Activated naive CD4-positive, alpha-beta T cell treated with anti-CD3 and anti-CD28 coated beads for 36 hours (primary cell): ENCODE measurements at regions of chr14 and their contacts with region 1.

Region 1: DNA sequence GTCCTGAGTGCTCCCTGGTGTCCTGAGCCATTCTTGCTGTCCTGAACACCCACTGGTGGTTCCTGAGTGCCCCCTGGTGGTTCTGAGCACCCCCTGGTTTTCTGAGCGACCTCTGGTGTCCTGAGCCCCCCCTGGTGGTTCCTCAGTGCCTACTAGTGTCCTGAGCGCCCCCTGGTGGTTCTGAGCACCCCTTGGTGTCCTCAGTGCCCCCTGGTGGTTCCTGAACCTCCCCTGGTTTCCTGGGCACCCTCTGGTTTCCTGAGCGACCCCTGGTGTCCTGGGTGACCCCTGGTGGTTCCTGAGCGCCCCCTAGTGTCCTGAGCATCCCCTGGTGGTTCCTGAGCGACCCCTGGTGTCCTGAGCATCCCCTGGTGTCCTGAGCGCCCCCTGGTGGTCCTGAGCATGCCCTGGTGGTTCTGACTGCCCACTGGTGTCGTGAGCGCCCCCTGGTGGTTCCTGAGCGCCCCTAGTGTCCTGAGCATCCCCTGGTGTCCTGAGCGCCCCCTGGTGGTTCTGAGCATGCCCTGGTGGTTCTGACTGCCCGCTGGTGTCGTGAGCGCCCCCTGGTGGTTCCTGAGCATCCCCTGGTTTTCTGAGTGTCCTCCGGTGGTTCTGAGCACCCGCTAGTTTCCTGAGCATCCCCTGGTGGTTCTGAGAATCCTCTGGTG is 473.1 kb downstream of the TMEM121 start:
- DNase-seq: peak; percentile 96
- H3K4me3 Mint-ChIP-seq: peak overlapping the region; percentile 60
- H3K27ac Mint-ChIP-seq: peak overlapping the region; percentile 75
- H3K4me1 Mint-ChIP-seq: peaks cover 45% of the 10 kb centered on the region
- H3K27me3 Mint-ChIP-seq: no peaks in the 10 kb centered on the region

Region 2: DNA sequence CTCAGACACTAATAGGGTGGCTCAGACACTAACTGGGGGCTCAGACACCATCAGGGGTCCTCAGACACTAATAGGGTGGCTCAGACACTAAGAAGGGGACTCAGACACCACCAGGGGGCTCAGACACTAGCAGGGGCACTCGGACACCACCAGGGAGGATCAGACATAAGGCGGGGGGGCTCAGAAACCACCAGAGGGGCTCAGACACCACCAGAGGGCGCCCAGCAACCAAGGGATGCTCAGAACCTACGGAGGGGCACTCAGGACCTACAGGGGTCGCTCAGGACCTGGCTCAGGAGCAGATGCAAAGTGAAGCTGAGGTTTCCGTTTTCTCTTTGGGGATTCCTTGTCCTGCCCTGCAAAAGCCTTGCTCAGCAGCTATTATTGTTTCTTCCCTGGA is 24.6 kb before region 1 on chr14:
- CTCF ChIA-PET with region 1: interaction called, 21 read pairs
- intact Hi-C with region 1: loop called (anchors 1 kb)
- DNase-seq: peak; percentile 64
- H3K4me3 Mint-ChIP-seq: no peak overlapping the region
- H3K27ac Mint-ChIP-seq: no peak overlapping the region
- H3K4me1 Mint-ChIP-seq: peaks cover under 1% of the 10 kb centered on the region
- H3K27me3 Mint-ChIP-seq: no peaks in the 10 kb centered on the region

Region 3: DNA sequence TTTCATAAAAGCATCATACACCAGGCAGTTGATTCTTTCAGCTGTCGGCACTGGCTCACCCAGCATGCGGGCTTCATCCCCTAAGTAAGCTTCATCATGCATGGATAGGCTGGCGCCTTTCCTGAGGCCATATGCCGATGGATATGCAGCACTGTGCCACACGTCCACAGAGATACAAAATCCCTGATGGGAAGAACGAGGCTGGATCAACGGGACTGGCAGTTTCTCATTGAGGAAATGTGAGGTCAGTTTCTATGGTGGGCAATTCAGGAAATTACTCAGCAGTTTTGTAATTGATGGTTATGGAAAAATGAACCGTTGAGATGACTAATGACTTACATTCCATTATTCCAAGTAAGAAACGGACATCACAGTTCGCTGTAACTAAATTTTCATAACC is 19.3 kb before region 1 on chr14:
- CTCF ChIA-PET with region 1: interaction called, 21 read pairs
- intact Hi-C with region 1: loop called (anchors 1 kb)
- DNase-seq: no peak
- H3K4me3 Mint-ChIP-seq: no peak overlapping the region
- H3K27ac Mint-ChIP-seq: no peak overlapping the region
- H3K4me1 Mint-ChIP-seq: peaks cover 33% of the 10 kb centered on the region
- H3K27me3 Mint-ChIP-seq: no peaks in the 10 kb centered on the region

Region 4: DNA sequence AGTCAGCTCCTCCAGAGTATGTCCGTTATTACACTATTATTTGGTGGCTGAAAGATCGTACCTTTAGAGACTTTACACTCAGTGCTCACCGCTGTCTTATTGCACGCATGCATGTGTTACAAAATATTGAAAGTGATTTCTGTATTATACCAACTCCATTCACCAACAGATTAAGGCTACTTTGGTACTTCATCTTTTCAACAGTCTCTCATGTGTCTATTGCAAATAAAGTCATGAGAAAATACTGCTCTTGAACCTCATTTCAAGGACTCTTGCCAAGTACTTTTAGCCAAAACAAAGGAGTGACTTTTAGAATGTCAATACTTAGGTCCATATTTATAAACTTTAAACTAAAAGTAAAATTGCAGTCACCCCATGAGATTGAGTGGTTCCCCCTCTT is 30.5 kb after region 1 on chr14:
- CTCF ChIA-PET with region 1: interaction called, 11 read pairs
- intact Hi-C with region 1: no loop called
- DNase-seq: no peak
- H3K4me3 Mint-ChIP-seq: no peak overlapping the region
- H3K27ac Mint-ChIP-seq: no peak overlapping the region
- H3K4me1 Mint-ChIP-seq: peaks cover 37% of the 10 kb centered on the region
- H3K27me3 Mint-ChIP-seq: no peaks in the 10 kb centered on the region

Region 5: DNA sequence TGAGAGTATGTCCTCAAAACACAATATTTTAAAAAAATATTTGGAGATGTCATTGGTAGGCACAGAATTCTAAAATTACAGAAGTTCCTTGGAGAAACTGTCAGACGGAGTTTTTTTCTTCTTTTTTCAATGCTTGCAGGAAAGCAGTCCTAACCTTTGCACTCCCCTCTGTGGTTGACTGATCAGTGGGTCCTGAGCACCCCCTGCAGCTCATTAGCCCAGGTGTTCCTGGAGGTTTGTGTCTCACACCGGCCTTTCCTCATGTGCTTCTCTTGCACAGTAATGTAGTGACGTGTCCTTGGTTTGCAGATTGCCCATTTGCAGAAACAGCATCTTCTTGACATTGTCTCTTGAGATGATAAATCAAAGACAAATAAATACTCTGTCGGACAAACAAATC is 39.9 kb after region 1 on chr14:
- CTCF ChIA-PET with region 1: interaction called, 16 read pairs
- intact Hi-C with region 1: loop called (anchors 1 kb)
- DNase-seq: peak; percentile 87
- H3K4me3 Mint-ChIP-seq: no peak overlapping the region
- H3K27ac Mint-ChIP-seq: peak overlapping the region; percentile 11
- H3K4me1 Mint-ChIP-seq: peaks cover 39% of the 10 kb centered on the region
- H3K27me3 Mint-ChIP-seq: peaks cover 2% of the 10 kb centered on the region